ENCODE measurements at regions of chr5 and their contacts with region 1.

Region 1: DNA sequence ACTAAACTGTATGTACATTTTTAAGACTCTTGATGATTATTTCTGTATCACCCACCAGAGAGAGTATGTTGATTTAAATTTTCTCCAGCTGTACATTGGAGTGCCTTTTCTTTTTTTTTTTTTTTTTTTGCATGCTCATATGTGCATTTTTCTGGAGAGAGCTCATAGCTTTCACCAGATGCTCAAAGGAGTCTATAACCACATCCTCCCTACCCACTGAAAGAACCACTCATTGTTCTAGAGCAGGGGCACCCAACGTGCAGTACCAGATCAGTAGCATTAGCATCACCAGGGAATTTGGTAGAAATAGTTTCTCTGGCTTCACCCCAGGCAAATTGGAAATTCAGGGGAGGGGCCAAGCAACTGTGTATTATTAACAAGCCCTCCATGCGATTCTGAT is 53.9 kb upstream of the TMEM171 start:
- DNase-seq: no peak
- H3K4me3 ChIP-seq: no peak overlapping the region
- H3K27ac ChIP-seq: no peak overlapping the region
- H3K4me1 ChIP-seq: no peaks in the 10 kb centered on the region
- H3K27me3 ChIP-seq: no peaks in the 10 kb centered on the region
- CTCF ChIP-seq: no peak

Region 2: GRCh38 chr5:73007051-73007450 is 59.4 kb before region 1 on chr5:
- intact Hi-C with region 1: loop called (anchors 10 kb)
- DNase-seq: no peak
- H3K4me3 ChIP-seq: no peak overlapping the region
- H3K27ac ChIP-seq: no peak overlapping the region
- H3K4me1 ChIP-seq: no peaks in the 10 kb centered on the region
- H3K27me3 ChIP-seq: no peaks in the 10 kb centered on the region
- CTCF ChIP-seq: no peak

Region 3: GRCh38 chr5:73103870-73104299 is 37.4 kb after region 1 on chr5:
- intact Hi-C with region 1: no loop called
- DNase-seq: no peak
- H3K4me3 ChIP-seq: no peak overlapping the region
- H3K27ac ChIP-seq: no peak overlapping the region
- H3K4me1 ChIP-seq: no peaks in the 10 kb centered on the region
- H3K27me3 ChIP-seq: no peaks in the 10 kb centered on the region
- CTCF ChIP-seq: no peak

Measured in tibial artery (tissue), 4 donors.